ENCODE measurements at regions of chr15 and their contacts with region 1.

Region 1: DNA sequence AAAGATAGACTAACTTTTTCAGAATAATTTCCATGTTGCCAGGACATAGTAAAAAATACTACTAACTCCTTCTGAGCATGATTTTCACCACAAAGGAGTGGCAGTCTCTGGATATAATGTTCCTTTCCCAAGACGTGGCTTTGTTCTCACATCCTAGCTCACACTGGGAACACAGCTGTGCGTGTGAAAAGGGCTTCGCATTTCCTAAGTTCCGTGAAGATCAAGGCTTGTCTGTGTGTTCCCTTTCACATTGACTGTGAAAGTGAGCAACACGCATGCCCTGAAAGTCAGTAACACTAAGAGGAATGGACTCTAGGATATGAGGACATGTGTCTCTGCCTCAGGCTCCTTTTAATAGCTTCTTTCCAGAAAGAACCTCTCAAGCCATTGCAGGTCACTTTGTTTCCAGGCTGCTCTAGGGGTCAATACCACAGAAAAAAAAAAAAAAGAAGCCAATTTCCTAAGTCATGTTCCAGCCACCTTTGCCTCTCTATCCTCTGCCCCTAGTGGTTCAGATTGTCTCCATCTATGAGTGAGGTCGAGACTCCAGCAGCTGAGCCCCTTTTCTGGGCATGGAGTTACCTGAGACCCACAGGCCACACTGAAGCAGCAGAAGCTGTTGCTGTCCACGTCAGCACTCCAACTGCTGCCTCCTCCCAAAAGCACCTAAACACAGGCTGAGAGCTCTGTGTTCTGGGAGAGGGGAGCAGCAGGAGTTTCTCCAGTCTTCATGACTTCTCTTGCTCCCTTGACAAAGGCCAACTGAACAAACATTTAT is 355.9 kb downstream of the RSL24D1 start:
- DNase-seq: no peak
- ATAC-seq: no peak
- H3K4me3 ChIP-seq: no peak overlapping the region
- H3K27ac ChIP-seq: no peak overlapping the region
- H3K4me1 ChIP-seq: no peaks in the 10 kb centered on the region
- H3K27me3 ChIP-seq: no peaks in the 10 kb centered on the region
- CTCF ChIP-seq: no peak
- POLR2A ChIP-seq: no peak

Region 2: DNA sequence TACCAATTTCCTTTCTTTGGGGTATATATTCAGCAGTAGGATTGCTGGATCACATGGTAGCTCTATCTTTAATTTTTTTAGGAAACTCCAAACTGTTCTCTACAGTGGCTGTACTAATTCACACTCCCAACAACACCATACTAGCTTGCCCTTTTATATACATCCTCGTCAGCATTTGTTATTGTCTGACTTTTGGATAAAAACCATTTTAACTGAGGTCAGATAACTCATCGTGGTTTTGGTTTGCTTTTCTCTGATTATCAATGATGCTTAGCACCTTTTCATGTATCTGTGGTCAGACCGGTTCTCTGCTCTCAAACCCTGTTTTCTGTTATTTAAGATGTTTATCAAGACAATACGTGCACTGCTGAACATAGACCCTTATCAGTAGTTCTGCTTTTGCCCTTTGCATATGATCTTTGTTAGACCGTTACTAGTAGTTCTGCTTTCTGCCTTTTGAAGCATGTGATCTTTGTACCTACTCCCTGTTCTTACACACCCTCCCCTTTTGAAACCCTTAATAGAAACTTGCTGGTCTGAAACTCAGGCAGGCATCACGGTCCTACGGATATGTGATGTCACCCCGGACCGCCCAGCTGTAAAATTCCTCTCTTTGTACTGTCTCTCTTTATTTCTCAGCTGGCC is 118.3 kb before region 1 on chr15:
- in situ Hi-C with region 1: loop called in 1 of 4 experiments (anchors 25 kb)
- intact Hi-C with region 1: no loop called
- DNase-seq: no peak
- ATAC-seq: no peak
- H3K4me3 ChIP-seq: no peak overlapping the region
- H3K27ac ChIP-seq: no peak overlapping the region
- H3K4me1 ChIP-seq: no peaks in the 10 kb centered on the region
- H3K27me3 ChIP-seq: no peaks in the 10 kb centered on the region
- CTCF ChIP-seq: no peak
- POLR2A ChIP-seq: no peak

Measured in gastrocnemius medialis (tissue), 4 donors.